Prostate gland (tissue), 2 donors: ENCODE measurements at regions of chr7 and their contacts with region 1.

Region 1: DNA sequence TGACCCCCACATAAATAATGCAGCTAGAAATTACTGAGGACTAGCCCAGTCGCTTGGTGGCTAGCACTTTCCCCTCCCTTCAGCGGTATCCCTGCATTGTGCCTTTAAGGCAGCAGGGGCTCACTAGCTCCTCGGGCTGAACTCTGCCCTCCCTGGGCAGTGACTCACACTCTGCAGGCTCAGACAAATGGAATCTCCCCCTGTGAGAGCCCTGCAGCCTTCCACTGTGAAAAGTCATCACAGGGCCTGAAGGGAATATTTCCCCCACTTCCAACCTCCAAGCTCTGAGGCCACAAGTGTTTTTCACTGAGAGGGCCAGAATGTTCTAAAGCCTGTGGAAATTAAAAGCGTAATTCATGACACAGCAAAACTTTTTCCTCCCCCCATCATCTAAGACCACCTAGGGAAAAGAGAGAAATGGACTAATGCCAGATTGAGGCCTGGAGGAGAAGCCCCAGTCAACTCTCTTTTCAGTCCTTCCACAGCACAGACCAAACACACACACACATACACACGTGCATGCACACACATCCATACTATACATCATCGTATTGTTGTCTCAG is 93.6 kb upstream of the COL1A2 start:
- DNase-seq: peak; percentile 5
- H3K4me3 ChIP-seq: no peak overlapping the region
- H3K27ac ChIP-seq: peak overlapping the region; percentile 28 to 46
- H3K4me1 ChIP-seq: no peaks in the 10 kb centered on the region
- H3K27me3 ChIP-seq: no peaks in the 10 kb centered on the region
- CTCF ChIP-seq: no peak
- POLR2A ChIP-seq: no peak

Region 2: GRCh38 chr7:94355454-94355853 is 54.3 kb after region 1 on chr7:
- intact Hi-C with region 1: loop called (anchors 2 kb)
- DNase-seq: no peak
- H3K4me3 ChIP-seq: no peak overlapping the region
- H3K27ac ChIP-seq: no peak overlapping the region
- H3K4me1 ChIP-seq: no peaks in the 10 kb centered on the region
- H3K27me3 ChIP-seq: no peaks in the 10 kb centered on the region
- CTCF ChIP-seq: no peak
- POLR2A ChIP-seq: no peak